ENCODE measurements at regions of chr4 and their contacts with region 1.

Region 1: GRCh38 chr4:48127682-48128394 is 6.2 kb downstream of the TXK start:
- DNase-seq: peak; percentile 74
- H3K4me3 Mint-ChIP-seq: peak overlapping the region; percentile 66
- H3K27ac Mint-ChIP-seq: peak overlapping the region; percentile 97
- H3K4me1 Mint-ChIP-seq: peaks cover 84% of the 10 kb centered on the region
- H3K27me3 Mint-ChIP-seq: no peaks in the 10 kb centered on the region

Region 2: GRCh38 chr4:47485047-47485692 is 642.7 kb before region 1 on chr4 and contains the start of gene ATP10D:
- intact Hi-C with region 1: loop called (anchors 10 kb)
- DNase-seq: peak; percentile 72
- H3K4me3 Mint-ChIP-seq: peak within 1 kb of the TSS; percentile 92
- H3K27ac Mint-ChIP-seq: peak within 1 kb of the TSS; percentile 51
- H3K4me1 Mint-ChIP-seq: peaks cover 27% of the 10 kb centered on the region
- H3K27me3 Mint-ChIP-seq: peaks cover 9% of the 10 kb centered on the region
- total RNA-seq, gene ATP10D: 1.6 and 1.9 TPM in 2 replicates

Region 3: DNA sequence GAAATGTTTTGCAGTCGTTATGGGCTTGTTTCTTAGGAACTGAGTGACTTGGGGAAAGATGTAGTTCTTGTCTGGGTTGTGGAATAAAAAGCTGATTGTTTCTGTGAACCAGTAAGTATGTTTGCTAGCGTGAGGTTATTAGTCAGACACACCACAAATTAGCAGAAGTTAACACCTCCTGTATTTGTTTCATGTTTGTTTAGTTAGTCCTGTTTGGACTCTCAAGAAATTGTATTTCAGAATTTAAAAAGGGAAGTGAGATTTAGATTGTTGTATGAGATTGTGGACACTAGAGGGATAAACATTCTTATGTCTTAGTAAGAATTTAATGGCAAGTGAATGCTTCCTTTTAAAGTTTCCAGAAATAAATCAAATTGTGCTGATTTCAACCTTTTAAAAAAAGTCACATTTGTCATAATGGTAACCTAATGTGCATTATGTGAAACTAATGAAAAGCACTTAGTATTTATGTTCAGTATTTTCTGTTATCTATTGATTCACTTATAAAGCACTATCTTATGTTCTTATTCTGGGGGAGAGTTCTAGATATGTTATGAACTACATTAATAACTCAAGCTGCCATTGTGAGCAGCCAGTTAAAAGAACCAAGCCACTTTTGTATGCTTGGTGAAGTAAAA is 617.2 kb before region 1 on chr4:
- intact Hi-C with region 1: no loop called
- DNase-seq: no peak
- H3K4me3 Mint-ChIP-seq: no peak overlapping the region
- H3K27ac Mint-ChIP-seq: no peak overlapping the region
- H3K4me1 Mint-ChIP-seq: no peaks in the 10 kb centered on the region
- H3K27me3 Mint-ChIP-seq: peaks cover 8% of the 10 kb centered on the region

Region 4: DNA sequence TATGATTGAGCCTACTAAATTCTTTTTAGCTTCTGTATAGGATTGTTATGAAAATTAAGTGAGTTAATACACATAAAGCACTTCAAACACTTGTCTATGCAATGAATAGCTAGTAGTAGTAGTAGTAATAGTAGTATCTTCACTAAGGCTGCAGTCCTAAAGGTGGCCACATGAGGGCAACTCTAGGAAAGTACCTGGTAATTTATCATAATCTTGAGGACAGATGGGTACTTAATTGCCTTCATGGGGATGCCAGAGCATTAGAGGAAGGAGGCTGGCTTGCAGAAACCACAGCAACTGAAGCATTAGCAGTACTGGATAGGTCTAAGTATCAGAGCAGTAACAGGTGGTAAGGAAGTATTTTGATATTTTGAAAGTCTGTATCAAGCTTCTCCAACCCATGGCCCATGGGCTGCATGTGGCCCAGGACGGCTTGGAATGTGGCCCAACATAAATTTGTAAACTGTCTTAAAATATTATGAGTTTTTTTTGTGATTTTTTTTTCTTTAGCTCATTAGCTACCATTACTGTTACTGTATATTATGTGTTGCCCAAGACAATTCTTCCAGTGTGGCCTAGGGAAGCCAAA is 93.9 kb before region 1 on chr4:
- intact Hi-C with region 1: loop called (anchors 1 kb)
- DNase-seq: peak; percentile 28
- H3K4me3 Mint-ChIP-seq: no peak overlapping the region
- H3K27ac Mint-ChIP-seq: no peak overlapping the region
- H3K4me1 Mint-ChIP-seq: peaks cover 33% of the 10 kb centered on the region
- H3K27me3 Mint-ChIP-seq: peaks cover 4% of the 10 kb centered on the region

Region 5: GRCh38 chr4:48141048-48141447 is 13.2 kb after region 1 on chr4:
- intact Hi-C with region 1: loop called (anchors 1 kb)
- DNase-seq: no peak
- H3K4me3 Mint-ChIP-seq: no peak overlapping the region
- H3K27ac Mint-ChIP-seq: peak overlapping the region; percentile 1
- H3K4me1 Mint-ChIP-seq: peaks cover 52% of the 10 kb centered on the region
- H3K27me3 Mint-ChIP-seq: no peaks in the 10 kb centered on the region

Region 6: GRCh38 chr4:48340965-48341775 is 213.3 kb after region 1 on chr4 and contains the start of gene SLAIN2:
- intact Hi-C with region 1: loop called (anchors 1 kb)
- DNase-seq: peak; percentile 98
- H3K4me3 Mint-ChIP-seq: peak within 1 kb of the TSS; percentile 98
- H3K27ac Mint-ChIP-seq: peak within 1 kb of the TSS; percentile 98
- H3K4me1 Mint-ChIP-seq: peaks cover 74% of the 10 kb centered on the region
- H3K27me3 Mint-ChIP-seq: no peaks in the 10 kb centered on the region
- total RNA-seq, gene SLAIN2: 71.4 and 79.4 TPM in 2 replicates

Region 7: DNA sequence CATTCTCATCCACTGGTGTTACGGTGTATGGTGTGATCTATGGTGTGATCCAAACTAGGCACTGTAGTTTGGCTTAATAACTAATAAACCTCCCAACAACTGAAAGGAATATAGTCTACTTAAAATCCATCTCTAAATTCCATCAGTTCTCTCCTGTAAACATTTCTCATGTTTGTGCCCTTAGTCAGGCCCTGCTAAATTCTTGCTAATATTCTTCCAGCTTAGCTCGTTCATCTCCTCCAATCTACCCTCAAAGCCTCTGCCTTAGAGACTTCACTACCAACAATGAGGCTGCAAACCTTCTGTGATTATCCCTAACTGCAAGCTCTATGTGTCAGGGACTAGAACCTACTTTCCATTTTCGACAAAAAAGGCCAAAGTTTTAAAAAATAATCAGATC is 390.3 kb after region 1 on chr4:
- intact Hi-C with region 1: no loop called
- DNase-seq: no peak
- H3K4me3 Mint-ChIP-seq: no peak overlapping the region
- H3K27ac Mint-ChIP-seq: no peak overlapping the region
- H3K4me1 Mint-ChIP-seq: no peaks in the 10 kb centered on the region
- H3K27me3 Mint-ChIP-seq: no peaks in the 10 kb centered on the region

Region 8: GRCh38 chr4:48906206-48907173 is 778.7 kb after region 1 on chr4 and contains the start of gene OCIAD2:
- intact Hi-C with region 1: loop called (anchors 5 kb)
- DNase-seq: peak; percentile 71
- H3K4me3 Mint-ChIP-seq: peak within 1 kb of the TSS; percentile 100
- H3K27ac Mint-ChIP-seq: peak within 1 kb of the TSS; percentile 96
- H3K4me1 Mint-ChIP-seq: peaks cover 53% of the 10 kb centered on the region
- H3K27me3 Mint-ChIP-seq: no peaks in the 10 kb centered on the region
- total RNA-seq, gene OCIAD2: 59.6 and 62.5 TPM in 2 replicates